ENCODE measurements at regions of chr2 and their contacts with region 1.

Region 1: DNA sequence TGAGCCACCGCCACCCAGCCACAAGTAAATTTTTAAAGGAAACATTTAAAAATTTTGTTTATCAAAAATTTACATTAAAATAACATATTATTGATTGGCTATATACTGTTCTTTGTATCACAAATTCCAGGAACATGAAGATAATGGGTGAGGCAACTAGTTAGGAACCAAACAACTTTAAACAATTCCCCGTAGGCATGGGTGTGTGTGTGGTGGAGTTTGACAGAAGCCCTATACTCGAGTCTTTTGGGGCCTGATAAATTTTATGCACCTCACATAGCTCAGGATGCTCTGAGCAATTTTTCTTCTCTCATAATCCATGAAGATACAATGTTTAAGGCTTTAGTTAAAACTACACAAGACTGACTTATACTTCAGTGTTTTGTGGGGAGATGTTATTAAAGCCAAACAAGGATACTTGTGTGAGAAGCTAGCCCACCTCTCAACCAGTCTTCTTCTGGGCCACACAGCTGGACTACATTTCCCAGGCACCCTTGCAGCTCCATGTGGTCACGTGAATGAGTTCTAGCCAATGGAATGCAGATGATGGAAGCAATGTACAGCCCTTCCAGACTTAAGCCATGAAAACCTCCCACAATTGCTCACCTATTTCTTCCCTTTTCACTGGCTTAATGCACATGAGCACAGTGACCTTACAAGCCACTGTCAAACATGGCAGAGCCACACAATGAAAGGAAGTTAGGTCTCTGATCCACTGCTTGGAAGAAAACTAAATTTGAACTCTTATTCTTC is 20.2 kb upstream of the FEZ2 start:
- DNase-seq: peak; percentile 71 to 88
- ATAC-seq: peak; percentile 95 to 100
- H3K4me3 ChIP-seq: no peak overlapping the region
- H3K27ac ChIP-seq: no peak overlapping the region
- H3K4me1 ChIP-seq: no peaks in the 10 kb centered on the region
- CTCF ChIP-seq: no peak
- EP300 ChIP-seq: no peak
- POLR2A ChIP-seq: no peak
- RAD21 ChIP-seq: no peak

Region 2: DNA sequence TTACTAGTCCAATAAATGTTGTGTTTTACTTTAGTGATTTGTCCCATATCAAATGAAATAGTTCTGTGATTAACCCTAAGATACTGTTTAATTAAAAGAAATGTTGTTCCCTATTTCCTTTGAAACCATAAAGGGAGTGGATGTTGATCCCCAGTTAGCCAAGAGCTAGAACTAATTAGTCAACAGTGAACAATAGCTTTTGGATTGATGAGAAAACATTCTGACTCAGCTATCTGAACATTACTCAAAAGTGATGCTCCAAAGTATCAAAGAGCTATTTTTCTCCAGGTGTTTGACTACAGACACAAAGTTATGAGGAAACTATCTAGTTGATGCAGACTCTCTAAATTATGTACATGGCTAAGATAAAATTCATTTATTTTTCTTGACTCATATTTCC is 12.9 kb before region 1 on chr2:
- CTCF ChIA-PET with region 1: interaction called, 14 read pairs
- POLR2A ChIA-PET with region 1: no interaction called
- DNase-seq: no peak
- ATAC-seq: no peak
- H3K4me3 ChIP-seq: no peak overlapping the region
- H3K27ac ChIP-seq: no peak overlapping the region
- H3K4me1 ChIP-seq: no peaks in the 10 kb centered on the region
- CTCF ChIP-seq: no peak
- EP300 ChIP-seq: no peak
- POLR2A ChIP-seq: no peak
- RAD21 ChIP-seq: no peak

Measured in A549 (cell line).